Uterus (tissue), 4 donors: ENCODE measurements at regions of chr11 and their contacts with region 1.

Region 1: DNA sequence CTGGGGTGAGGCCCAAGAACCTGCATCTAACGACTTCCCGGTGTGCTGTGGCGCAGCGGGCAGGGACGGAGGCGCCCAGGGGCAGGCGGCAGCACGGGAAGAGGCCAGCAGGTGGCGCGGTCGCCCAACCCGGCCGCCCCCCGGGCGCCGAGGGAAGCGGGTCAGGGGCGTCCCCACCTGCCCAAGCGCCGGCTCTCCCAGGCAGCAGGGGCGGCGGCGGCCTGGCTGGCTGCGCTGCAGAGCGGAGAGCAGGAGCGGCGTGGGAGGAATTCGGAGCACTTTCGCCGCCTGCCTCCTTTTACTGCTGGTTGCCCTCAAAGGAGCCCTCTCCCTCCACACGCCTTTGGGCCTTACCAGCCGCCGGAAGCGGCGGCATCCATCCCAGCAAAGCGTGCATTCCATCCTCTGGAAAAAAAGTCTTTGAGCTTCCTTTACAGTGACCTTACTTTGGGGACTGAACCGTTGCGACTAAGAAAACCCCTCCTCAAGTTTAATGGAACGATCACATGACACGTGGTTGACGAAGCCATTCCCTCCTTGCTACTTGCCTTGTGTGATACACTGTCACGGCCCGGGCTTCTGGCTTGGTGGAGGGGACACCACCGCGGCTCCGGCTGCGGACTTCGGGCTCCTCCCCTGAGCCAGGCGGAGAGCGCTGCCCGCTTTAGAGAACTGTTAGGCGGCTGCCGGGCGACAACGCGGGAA is 106.8 kb upstream of the CLMP start:
- DNase-seq: peak; percentile 19 to 55
- H3K4me3 ChIP-seq: peak overlapping the region in 1 of 2 donors; percentile 25
- H3K27ac ChIP-seq: no peak overlapping the region
- H3K4me1 ChIP-seq: no peaks in the 10 kb centered on the region
- H3K27me3 ChIP-seq: no peaks in the 10 kb centered on the region
- CTCF ChIP-seq: peak; percentile 56 to 87 (median 80)
- POLR2A ChIP-seq: no peak

Region 2: GRCh38 chr11:123480261-123480815 is 178.5 kb after region 1 on chr11:
- intact Hi-C with region 1: loop called (anchors 10 kb)
- DNase-seq: no peak
- H3K4me3 ChIP-seq: no peak overlapping the region
- H3K27ac ChIP-seq: no peak overlapping the region
- H3K4me1 ChIP-seq: no peaks in the 10 kb centered on the region
- H3K27me3 ChIP-seq: no peaks in the 10 kb centered on the region
- CTCF ChIP-seq: no peak
- POLR2A ChIP-seq: no peak